ENCODE measurements at regions of chr19 and their contacts with region 1.

Region 1: DNA sequence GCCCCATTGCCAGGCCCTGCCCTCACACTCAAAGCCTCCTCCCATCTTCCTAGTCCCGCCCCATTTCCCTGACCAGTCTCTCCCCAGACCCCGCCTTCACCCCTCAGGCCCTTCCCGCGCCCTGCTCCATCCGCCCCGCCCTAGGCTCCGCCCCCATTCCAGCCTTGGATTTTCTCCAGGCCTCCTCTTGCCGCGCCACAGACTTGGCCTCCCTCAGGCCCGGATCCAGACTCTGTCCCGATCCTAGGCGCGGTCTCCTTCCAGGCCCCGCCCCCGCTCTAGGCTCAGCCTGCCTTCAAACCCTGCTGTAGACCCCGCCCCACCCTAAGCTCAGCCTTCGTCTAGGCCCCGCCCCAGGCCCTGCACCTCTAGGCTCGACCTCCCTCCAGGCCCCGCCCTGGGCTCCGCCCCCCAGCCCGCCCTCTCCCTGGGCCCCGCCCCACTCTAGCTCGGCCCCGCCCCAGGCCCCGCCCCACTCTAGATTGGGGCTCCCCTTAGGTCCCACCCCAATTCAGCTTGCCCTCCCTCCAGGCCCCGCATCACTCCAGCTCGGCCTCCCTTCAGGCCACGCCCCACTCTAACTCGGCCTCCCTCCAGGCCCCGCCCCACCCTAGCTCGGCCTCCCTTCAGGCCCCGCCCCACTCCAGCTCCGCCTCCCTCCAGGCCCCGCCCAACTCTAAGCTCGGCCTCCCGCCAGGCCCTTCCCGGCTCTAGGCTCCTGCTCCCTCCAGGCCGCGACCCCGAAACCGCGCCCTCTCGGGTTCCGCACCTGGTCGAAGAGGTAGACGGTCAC is 18.5 kb downstream of the LMTK3 start:
- DNase-seq: peak; percentile 86
- ATAC-seq: peak; percentile 71
- H3K4me3 Mint-ChIP-seq: peak overlapping the region; percentile 50
- H3K27ac Mint-ChIP-seq: peak overlapping the region; percentile 47
- H3K4me1 Mint-ChIP-seq: peaks cover 45% of the 10 kb centered on the region
- H3K27me3 Mint-ChIP-seq: peaks cover 31% of the 10 kb centered on the region

Region 2: DNA sequence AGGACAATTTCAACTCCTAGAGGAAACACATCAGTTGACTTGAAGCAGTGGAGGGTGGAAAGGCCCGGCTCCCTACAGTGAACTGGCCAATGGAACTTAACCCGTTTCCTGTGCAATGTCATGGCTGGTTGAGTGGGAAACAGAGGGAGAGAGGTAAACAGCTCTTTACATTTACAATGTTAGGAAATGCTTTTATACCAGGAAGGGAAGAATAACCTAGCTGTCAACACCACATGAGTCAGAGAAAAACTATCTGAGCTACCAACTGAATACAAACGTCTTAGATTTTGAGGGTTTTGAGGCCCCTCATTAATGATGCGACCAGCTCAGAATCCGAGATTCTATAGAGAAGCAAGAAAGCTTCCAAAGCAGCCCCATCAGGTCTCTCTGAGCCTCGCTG is 274.1 kb before region 1 on chr19:
- CTCF ChIA-PET with region 1: no interaction called
- POLR2A ChIA-PET with region 1: no interaction called
- DNase-seq: no peak
- ATAC-seq: no peak
- H3K4me3 Mint-ChIP-seq: no peak overlapping the region
- H3K27ac Mint-ChIP-seq: no peak overlapping the region
- H3K4me1 Mint-ChIP-seq: no peaks in the 10 kb centered on the region
- H3K27me3 Mint-ChIP-seq: no peaks in the 10 kb centered on the region

Region 3: GRCh38 chr19:48469289-48469881 is 23.7 kb before region 1 on chr19 and contains the start of gene CYTH2:
- CTCF ChIA-PET with region 1: interaction called, 12 read pairs
- POLR2A ChIA-PET with region 1: no interaction called
- DNase-seq: peak; percentile 83
- ATAC-seq: peak; percentile 30
- H3K4me3 Mint-ChIP-seq: peak within 1 kb of the TSS; percentile 79
- H3K27ac Mint-ChIP-seq: peak within 1 kb of the TSS; percentile 85
- H3K4me1 Mint-ChIP-seq: peaks cover 28% of the 10 kb centered on the region
- H3K27me3 Mint-ChIP-seq: no peaks in the 10 kb centered on the region
- total RNA-seq, gene CYTH2: 48.3 to 50.3 TPM

Region 4: DNA sequence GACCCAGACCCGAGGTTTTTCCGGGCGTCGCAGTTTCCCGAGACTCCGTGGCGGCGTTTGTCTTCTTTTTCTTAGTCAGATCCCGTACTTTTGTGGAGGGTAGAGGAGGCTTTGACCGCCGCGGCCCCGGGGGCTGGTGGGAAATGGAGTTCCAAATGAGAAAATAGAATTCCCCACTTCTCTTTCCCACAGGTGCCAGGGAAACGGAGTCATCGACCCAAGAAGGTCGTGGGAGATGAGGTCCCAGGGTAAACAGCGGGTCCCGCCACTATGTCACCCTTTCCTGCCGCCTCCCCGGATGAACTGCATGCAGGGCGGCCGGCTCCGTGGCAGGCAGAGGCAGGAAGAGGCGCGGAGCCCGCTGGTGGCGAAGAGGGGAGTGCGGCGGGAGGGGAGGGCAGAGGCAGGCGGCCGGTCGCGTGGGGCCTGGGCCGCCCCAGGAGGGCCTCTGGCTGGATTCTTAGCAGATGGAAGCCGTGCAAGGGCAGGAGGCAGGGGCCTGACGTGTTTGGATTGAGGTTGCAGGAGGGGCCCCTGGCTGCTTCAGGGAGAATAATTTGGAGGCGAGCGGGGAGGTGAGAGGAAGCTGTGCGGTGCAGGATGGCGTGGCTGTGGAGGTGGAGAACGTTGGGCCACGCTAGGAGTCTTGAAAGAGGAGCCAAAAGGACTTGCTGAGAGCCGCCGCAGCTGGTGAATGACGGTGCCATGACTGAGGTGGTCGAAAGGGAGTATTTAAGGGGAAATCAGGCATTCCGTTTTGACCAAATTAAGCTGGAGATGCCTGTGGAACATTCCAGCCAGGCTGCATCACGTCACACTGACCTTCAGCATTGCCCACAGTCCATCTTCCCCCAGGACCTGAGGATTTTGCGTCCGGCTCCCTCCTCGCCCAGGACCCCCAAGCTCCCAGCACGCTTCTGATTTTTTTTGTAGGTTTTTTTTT is 12.3 kb before region 1 on chr19:
- CTCF ChIA-PET with region 1: interaction called, 19 read pairs
- POLR2A ChIA-PET with region 1: interaction called, 5 read pairs
- DNase-seq: peak; percentile 76
- ATAC-seq: peak; percentile 88
- H3K4me3 Mint-ChIP-seq: peak overlapping the region; percentile 60
- H3K27ac Mint-ChIP-seq: peak overlapping the region; percentile 92
- H3K4me1 Mint-ChIP-seq: peaks cover 31% of the 10 kb centered on the region
- H3K27me3 Mint-ChIP-seq: no peaks in the 10 kb centered on the region

Region 5: DNA sequence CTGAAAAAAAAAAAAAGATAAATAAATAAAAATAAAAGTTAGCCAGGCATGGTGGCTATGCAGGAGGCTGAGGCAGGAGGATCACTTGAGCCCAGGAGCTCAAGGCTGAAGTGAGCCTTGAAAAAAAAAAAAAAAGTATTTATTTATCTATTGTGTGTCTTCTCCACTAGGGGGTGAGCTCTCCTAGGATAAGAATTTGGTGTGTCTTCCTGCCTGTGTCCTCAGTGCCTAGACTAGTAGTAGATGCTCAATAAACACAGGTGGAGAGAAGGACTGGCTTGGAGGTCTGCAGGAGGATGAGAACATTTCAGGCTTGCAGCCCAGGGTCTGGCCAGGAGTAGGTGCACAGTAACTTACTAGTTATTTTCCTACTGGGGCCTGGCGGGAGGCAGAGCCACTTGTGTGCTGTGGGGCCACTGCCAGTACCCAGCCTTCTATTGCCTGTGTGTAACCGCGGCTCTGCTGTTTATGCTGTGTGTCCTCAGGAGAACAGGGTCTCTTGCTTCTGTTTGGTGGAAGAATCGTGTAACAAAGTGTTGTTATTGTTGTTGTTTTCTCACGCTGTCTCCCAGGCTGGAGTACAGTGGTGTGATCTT is 13.1 kb after region 1 on chr19:
- CTCF ChIA-PET with region 1: interaction called, 22 read pairs
- POLR2A ChIA-PET with region 1: interaction called, 3 read pairs
- DNase-seq: peak; percentile 52
- ATAC-seq: peak; percentile 32
- H3K4me3 Mint-ChIP-seq: no peak overlapping the region
- H3K27ac Mint-ChIP-seq: no peak overlapping the region
- H3K4me1 Mint-ChIP-seq: peaks cover 29% of the 10 kb centered on the region
- H3K27me3 Mint-ChIP-seq: no peaks in the 10 kb centered on the region

Region 6: GRCh38 chr19:48588670-48589399 is 95.7 kb after region 1 on chr19:
- CTCF ChIA-PET with region 1: interaction called, 53 read pairs
- POLR2A ChIA-PET with region 1: no interaction called
- DNase-seq: peak; percentile 92
- ATAC-seq: peak; percentile 94
- H3K4me3 Mint-ChIP-seq: peak overlapping the region; percentile 77
- H3K27ac Mint-ChIP-seq: peak overlapping the region; percentile 87
- H3K4me1 Mint-ChIP-seq: peaks cover 27% of the 10 kb centered on the region
- H3K27me3 Mint-ChIP-seq: no peaks in the 10 kb centered on the region

Region 7: GRCh38 chr19:48608798-48609263 is 115.7 kb after region 1 on chr19:
- CTCF ChIA-PET with region 1: interaction called, 32 read pairs
- POLR2A ChIA-PET with region 1: no interaction called
- DNase-seq: peak; percentile 71
- ATAC-seq: peak; percentile 79
- H3K4me3 Mint-ChIP-seq: no peak overlapping the region
- H3K27ac Mint-ChIP-seq: peak overlapping the region; percentile 46
- H3K4me1 Mint-ChIP-seq: peaks cover 4% of the 10 kb centered on the region
- H3K27me3 Mint-ChIP-seq: no peaks in the 10 kb centered on the region

Region 8: GRCh38 chr19:48705431-48705830 is 212.3 kb after region 1 on chr19:
- CTCF ChIA-PET with region 1: no interaction called
- POLR2A ChIA-PET with region 1: no interaction called
- DNase-seq: no peak
- ATAC-seq: no peak
- H3K4me3 Mint-ChIP-seq: no peak overlapping the region
- H3K27ac Mint-ChIP-seq: no peak overlapping the region
- H3K4me1 Mint-ChIP-seq: no peaks in the 10 kb centered on the region
- H3K27me3 Mint-ChIP-seq: no peaks in the 10 kb centered on the region